ENCODE measurements at regions of chr2 and their contacts with region 1.

Region 1: DNA sequence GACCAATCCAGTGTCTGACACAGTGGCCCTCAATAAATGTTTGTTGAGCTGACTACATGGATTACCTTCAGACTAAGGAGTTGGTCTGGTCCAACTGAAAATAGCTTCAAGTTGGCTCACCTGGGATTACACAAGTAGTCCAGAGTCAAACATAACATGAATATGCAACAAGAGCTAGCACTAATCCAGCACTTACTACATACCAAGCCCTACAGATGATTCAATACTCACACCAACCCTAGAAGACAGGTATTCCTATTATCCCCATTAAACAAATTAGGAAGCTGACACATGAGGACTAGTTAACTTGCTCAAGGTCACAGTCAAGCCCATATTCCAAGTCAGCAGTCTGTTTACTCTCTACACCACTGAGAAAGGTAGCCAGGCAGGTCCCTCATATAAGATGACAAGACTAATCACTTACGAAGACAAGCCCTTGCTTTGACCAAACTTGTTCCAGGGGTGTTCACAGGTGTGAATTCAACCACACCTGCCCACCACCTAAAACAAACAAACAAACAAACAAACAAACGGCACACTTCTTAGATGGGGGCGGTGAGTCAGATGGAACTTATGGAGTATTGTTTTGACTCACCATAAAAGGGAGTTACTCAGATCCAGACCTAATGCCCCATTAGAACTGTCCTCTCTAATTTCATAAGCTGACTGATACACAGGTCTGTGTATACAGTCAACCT is 29.1 kb downstream of the TMEM131 start:
- DNase-seq: no peak
- H3K4me3 ChIP-seq: no peak overlapping the region
- H3K4me3 Mint-ChIP-seq: no peak overlapping the region
- H3K27ac Mint-ChIP-seq: no peak overlapping the region
- H3K4me1 ChIP-seq: peaks cover 11% of the 10 kb centered on the region; the same call in 1 of the 2 replicates
- H3K4me1 Mint-ChIP-seq: peaks cover 37% of the 10 kb centered on the region
- H3K27me3 ChIP-seq: no peaks in the 10 kb centered on the region
- H3K27me3 Mint-ChIP-seq: no peaks in the 10 kb centered on the region
- CTCF ChIP-seq: no peak

Region 2: DNA sequence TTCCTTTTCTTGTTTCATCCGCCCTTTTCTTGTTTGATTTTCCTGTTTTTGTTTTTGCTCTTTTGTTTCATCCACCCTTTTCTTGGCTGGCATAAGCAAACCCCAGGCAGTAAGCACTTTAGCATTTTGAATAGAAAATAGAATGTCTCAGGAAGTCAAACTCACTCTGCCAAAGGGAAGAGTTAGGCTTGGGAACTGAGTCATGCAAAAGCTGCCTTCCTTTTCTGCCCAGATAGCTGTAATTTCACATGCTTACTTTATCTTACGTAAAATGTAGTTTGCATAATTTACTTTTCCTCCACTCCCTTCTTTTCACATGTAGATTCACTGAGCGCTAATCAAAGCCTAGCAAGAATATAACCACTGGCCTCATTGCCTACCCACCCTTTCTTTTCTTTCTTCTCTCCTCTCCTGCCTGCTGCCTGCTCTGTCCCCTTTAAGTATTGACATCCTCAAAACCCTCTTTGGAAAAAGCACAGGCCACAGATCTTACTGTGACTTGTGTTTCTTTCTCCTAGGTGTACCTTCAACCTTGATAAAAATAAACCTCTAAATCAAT is 428.0 kb after region 1 on chr2:
- CTCF ChIA-PET with region 1: no interaction called
- POLR2A ChIA-PET with region 1: no interaction called
- intact Hi-C with region 1: loop called (anchors 10 kb)
- DNase-seq: no peak
- H3K4me3 ChIP-seq: no peak overlapping the region
- H3K4me3 Mint-ChIP-seq: no peak overlapping the region
- H3K27ac Mint-ChIP-seq: no peak overlapping the region
- H3K4me1 ChIP-seq: no peaks in the 10 kb centered on the region
- H3K4me1 Mint-ChIP-seq: no peaks in the 10 kb centered on the region
- H3K27me3 ChIP-seq: no peaks in the 10 kb centered on the region; the same call in 1 of the 2 replicates
- H3K27me3 Mint-ChIP-seq: peaks cover 19% of the 10 kb centered on the region
- CTCF ChIP-seq: no peak

Measured in Caco-2 (cell line).